ENCODE measurements at regions of chr15 and their contacts with region 1.

Region 1: DNA sequence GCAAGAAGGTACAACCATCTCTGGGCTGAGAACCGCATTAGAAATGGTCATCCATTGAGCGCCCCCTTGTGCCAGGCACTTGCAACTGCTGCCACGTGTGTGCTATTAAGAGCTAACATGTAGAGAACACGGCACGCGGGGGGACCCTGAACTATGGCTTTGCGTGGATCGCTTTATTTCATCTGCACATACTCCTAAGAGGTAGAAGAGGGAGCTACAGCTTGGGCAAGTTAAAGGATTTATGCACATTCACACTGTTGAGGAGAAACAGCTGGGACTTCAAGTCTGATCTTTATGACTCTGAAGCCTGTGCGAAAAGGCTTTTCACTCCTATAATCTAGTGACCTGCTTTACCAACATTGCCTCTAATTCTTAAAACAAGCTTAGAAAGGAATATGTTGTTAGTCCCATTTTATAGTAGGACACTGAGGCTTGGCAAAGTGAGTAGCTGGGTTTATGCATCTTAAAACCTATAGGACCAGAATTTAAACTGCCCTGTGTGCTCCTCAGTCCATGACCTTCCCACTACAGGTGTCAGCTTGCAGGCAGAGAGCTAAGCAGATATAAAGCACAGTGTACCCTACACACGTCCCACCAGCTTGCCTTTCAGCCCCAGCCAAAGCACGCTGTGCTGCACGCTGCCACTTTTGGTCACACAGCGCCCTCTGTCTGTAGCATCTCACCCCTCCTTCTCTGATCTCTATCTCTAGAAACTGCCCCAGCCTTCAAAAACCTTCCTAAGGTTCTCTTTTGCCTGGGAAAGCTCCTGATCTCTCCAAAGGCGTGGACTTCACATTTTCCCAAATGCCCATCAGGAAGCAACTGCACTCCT is 57.8 kb downstream of the STARD5 start:
- DNase-seq: peak; percentile 88
- H3K4me3 ChIP-seq: peak overlapping the region; percentile 18
- H3K27ac ChIP-seq: no peak overlapping the region
- H3K4me1 ChIP-seq: no peaks in the 10 kb centered on the region
- H3K27me3 ChIP-seq: no peaks in the 10 kb centered on the region
- CTCF ChIP-seq: peak; percentile 94

Region 2: DNA sequence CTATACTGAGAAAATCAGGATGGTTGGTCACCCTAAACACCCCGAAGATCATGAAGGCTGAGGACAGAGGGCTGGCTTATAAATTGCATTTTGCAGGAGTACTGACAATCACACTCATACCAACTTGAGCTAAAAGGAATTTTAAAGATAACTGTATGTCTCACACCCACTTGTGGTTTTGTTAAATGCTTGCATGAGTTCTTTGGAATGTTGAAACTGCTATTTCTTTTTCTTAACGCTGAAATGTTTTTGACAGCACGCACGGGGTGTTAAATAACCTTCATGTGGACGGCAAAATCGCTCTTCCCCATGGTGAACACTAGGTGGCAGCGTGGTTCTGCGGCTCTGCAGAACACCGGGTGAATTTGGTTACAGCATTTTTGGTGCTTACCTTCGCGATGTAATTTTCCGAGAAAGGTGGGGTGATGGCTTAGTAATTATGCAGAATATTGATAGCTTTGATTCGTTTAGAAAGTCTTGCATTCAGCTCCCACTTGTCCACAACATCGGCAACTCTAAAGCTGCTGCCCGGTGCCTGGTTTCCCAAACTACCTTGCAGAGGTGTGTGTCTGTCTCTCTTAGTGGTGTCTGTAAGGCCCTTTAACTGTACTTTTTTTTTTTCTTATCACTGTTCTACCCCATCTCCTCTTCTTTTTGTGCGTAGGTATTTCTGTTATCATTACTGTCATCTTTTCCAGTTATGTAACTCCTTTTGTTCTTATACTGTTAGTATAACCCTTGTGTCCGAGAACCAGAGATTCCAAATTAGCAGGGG is 810.3 kb before region 1 on chr15:
- CTCF ChIA-PET with region 1: interaction called, 4 read pairs
- POLR2A ChIA-PET with region 1: no interaction called
- intact Hi-C with region 1: loop called (anchors 5 kb)
- DNase-seq: peak; percentile 66
- H3K4me3 ChIP-seq: no peak overlapping the region
- H3K27ac ChIP-seq: no peak overlapping the region
- H3K4me1 ChIP-seq: no peaks in the 10 kb centered on the region
- H3K27me3 ChIP-seq: no peaks in the 10 kb centered on the region
- CTCF ChIP-seq: peak; percentile 93

Region 3: GRCh38 chr15:80970018-80970658 is 296.0 kb before region 1 on chr15:
- CTCF ChIA-PET with region 1: interaction called, 12 read pairs
- POLR2A ChIA-PET with region 1: no interaction called
- intact Hi-C with region 1: no loop called
- DNase-seq: peak; percentile 76
- H3K4me3 ChIP-seq: no peak overlapping the region
- H3K27ac ChIP-seq: no peak overlapping the region
- H3K4me1 ChIP-seq: peaks cover 3% of the 10 kb centered on the region
- H3K27me3 ChIP-seq: no peaks in the 10 kb centered on the region
- CTCF ChIP-seq: peak; percentile 78

Region 4: DNA sequence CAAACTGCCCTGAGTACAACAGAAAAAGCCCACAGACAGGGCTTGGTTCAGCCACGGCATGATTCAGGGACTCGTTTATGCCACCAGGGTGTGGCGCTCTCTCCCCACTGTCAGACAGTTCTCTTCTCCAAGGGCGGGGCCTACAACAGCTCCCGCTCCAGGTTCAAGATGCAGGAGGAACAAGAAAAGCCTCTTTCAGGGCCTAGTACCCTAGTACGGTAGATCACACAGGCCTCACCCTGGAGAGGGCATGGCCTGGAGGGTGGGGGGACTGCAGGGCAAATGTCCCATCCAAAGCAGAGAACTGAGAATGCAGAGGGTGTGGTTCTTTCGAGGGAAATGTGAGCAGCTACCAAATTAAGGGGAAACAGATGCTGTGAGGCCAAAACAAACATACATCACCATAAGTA is 288.5 kb before region 1 on chr15:
- CTCF ChIA-PET with region 1: interaction called, 13 read pairs
- POLR2A ChIA-PET with region 1: no interaction called
- intact Hi-C with region 1: loop called (anchors 1 kb)
- DNase-seq: peak; percentile 55
- H3K4me3 ChIP-seq: no peak overlapping the region
- H3K27ac ChIP-seq: no peak overlapping the region
- H3K4me1 ChIP-seq: peaks cover 10% of the 10 kb centered on the region
- H3K27me3 ChIP-seq: no peaks in the 10 kb centered on the region
- CTCF ChIP-seq: peak; percentile 57

Region 5: GRCh38 chr15:80989518-80990478 is 276.4 kb before region 1 on chr15 and contains the start of gene MESD:
- CTCF ChIA-PET with region 1: no interaction called
- POLR2A ChIA-PET with region 1: no interaction called
- intact Hi-C with region 1: loop called (anchors 5 kb)
- DNase-seq: peak; percentile 97
- H3K4me3 ChIP-seq: peak within 1 kb of the TSS; percentile 91
- H3K27ac ChIP-seq: peak within 1 kb of the TSS; percentile 86
- H3K4me1 ChIP-seq: peaks cover 12% of the 10 kb centered on the region
- H3K27me3 ChIP-seq: no peaks in the 10 kb centered on the region
- CTCF ChIP-seq: no peak
- total RNA-seq, gene MESD: 25.7 and 28.1 TPM in 2 replicates

Region 6: DNA sequence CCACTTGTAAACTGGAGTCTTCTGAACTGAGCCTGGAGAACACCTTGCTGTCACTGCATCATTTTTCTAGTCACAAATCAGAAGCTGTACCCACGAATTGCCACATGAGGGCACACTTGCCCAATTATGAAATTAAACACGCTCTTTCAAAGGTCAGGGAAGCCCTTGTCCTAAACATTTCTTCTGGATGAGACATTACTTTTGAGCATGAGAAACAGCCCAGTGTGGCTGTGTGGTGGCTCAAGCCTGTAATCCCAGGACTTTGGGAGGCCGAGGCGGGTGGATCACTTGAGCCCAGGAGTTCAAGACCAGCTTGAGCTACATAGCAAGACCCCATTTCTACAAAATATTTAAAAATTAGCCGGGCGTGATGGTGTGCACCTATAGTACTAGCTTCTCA is 159.6 kb before region 1 on chr15:
- CTCF ChIA-PET with region 1: interaction called, 32 read pairs
- POLR2A ChIA-PET with region 1: no interaction called
- intact Hi-C with region 1: loop called (anchors 1 kb)
- DNase-seq: peak; percentile 67
- H3K4me3 ChIP-seq: no peak overlapping the region
- H3K27ac ChIP-seq: no peak overlapping the region
- H3K4me1 ChIP-seq: peaks cover 4% of the 10 kb centered on the region
- H3K27me3 ChIP-seq: peaks cover 17% of the 10 kb centered on the region
- CTCF ChIP-seq: peak; percentile 79

Region 7: DNA sequence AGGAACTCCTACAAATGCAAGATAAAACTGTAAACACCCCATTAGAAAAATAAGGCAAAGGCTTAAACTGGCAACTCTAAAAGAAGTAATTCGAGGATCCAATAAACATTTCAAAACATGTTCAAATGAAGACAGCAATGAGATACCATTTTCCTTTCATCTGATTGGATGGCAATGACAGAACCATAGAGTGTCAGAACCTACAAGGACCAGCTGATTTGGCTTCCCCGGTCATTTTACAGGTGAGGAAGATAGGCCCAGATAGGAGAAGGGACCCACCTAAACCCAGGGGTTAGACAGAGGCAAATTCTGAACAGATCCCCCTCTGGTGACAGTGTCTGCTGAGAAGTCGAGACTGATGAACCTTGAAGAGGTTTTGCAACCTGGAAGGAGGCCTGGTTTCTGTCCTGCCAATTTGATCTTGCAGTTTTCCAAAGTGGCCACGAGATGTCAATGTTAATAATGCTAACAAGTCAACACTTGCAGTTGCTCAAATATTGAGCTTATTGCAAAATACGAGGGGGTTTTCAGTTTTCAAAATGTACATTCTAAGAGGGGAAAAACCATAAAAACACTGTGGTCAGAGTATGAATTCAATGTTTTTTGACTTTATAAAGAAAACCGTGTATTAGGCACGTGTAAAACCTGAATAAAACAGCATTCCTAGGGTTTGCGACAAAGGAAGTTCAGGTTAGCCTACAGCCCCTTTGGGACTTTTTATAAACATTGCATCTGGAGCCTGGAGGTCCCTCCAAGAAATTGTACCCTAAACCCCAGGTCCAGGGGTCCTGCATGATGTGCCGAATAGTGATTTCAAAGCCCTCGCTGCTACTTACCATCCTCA is 110.6 kb before region 1 on chr15:
- CTCF ChIA-PET with region 1: interaction called, 75 read pairs
- POLR2A ChIA-PET with region 1: no interaction called
- intact Hi-C with region 1: loop called (anchors 1 kb)
- DNase-seq: peak; percentile 48
- H3K4me3 ChIP-seq: no peak overlapping the region
- H3K27ac ChIP-seq: no peak overlapping the region
- H3K4me1 ChIP-seq: no peaks in the 10 kb centered on the region
- H3K27me3 ChIP-seq: no peaks in the 10 kb centered on the region
- CTCF ChIP-seq: peak; percentile 64

Measured in A673 (cell line).